Left cardiac atrium (tissue), 4 donors: ENCODE measurements at regions of chr3 and their contacts with region 1.

Region 1: GRCh38 chr3:43155464-43156121 is 49.7 kb upstream of the POMGNT2 start:
- DNase-seq: peak; percentile 71
- ATAC-seq: peak; percentile 85 to 88

Region 2: DNA sequence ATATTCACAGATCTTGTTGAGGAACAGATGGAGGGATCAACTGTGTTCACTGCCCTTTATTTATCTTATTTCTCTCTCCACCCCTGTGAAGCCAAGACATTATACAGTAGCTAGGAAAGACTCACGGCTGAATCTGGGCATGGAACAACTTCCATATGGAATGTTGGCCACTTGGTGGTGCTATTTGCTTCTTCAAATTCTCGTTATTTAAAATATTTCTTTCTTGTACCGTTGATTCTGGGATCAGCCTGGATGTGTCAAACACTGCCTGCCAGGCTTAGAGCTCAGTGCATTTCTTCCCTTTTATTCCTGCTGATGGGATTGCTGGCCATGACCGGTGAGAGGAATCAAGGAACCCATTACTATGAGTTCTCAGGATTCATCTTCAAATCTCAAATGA is 194.0 kb before region 1 on chr3:
- intact Hi-C with region 1: loop called (anchors 2 to 5 kb)
- DNase-seq: peak; percentile 28
- ATAC-seq: peak; percentile 57 to 74

Region 3: DNA sequence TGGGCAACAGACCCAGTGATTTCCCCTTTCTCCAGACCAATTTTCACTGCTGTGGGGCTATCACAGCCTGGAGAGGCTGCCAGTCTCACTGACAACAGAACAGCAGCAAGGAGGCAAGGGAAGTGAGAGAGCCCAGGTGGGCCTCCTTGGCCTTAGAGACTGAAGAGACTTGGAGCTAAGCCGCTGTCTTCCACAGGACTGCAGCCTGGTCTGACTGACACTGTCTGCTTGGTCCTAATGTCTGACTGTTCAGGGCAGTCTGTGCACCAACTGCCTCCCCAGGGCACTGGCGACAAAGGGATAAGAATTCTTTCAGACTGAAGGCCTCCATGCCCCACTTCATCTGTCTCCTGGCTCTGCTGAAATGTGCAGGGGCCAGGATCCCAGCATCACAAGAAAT is 61.2 kb before region 1 on chr3:
- intact Hi-C with region 1: no loop called
- DNase-seq: no peak
- ATAC-seq: no peak

Region 4: GRCh38 chr3:43105596-43106292 is 49.8 kb before region 1 on chr3 and contains the start of gene POMGNT2:
- intact Hi-C with region 1: loop called in 1 of 2 experiments (anchors 10 kb)
- DNase-seq: peak; percentile 94
- ATAC-seq: peak; percentile 97 to 98
- total RNA-seq, gene POMGNT2: 16.7 to 19.2 TPM

Region 5: GRCh38 chr3:43317461-43318316 is 162.1 kb after region 1 on chr3:
- intact Hi-C with region 1: no loop called
- DNase-seq: no peak
- ATAC-seq: peak; percentile 39 to 82